Gastrocnemius medialis (tissue), 4 donors: ENCODE measurements at regions of chr20 and their contacts with region 1.

Region 1: GRCh38 chr20:9344083-9344920 is 170.1 kb upstream of the LAMP5 start:
- DNase-seq: peak in 1 of 2 donors; percentile 4
- ATAC-seq: peak; percentile 27 to 54
- H3K4me3 ChIP-seq: no peak overlapping the region
- H3K27ac ChIP-seq: peak overlapping the region in 3 of 4 donors; percentile 5 to 31 (median 29)
- H3K4me1 ChIP-seq: peaks cover 11 to 16% of the 10 kb centered on the region in 2 donors
- H3K27me3 ChIP-seq: no peaks in the 10 kb centered on the region
- CTCF ChIP-seq: no peak
- POLR2A ChIP-seq: no peak

Region 2: GRCh38 chr20:9220874-9221547 is 123.3 kb before region 1 on chr20:
- in situ Hi-C with region 1: no loop called
- intact Hi-C with region 1: loop called (anchors 10 kb)
- DNase-seq: no peak
- ATAC-seq: no peak
- H3K4me3 ChIP-seq: no peak overlapping the region
- H3K27ac ChIP-seq: no peak overlapping the region
- H3K4me1 ChIP-seq: peaks cover 9 to 24% of the 10 kb centered on the region in 2 donors
- H3K27me3 ChIP-seq: no peaks in the 10 kb centered on the region
- CTCF ChIP-seq: no peak
- POLR2A ChIP-seq: no peak